Head of caudate nucleus (tissue), 42 donors: ENCODE measurements at regions of chr3 and their contacts with region 1.

Region 1: GRCh38 chr3:46488735-46489361 is 8.9 kb upstream of the RTP3 start:
- DNase-seq: peak; percentile 73 to 95 (median 89)

Region 2: GRCh38 chr3:46629551-46630517 is 141.0 kb after region 1 on chr3:
- intact Hi-C with region 1: loop called (anchors 5 kb)
- DNase-seq: peak; percentile 52 to 90 (median 80)

Region 3: DNA sequence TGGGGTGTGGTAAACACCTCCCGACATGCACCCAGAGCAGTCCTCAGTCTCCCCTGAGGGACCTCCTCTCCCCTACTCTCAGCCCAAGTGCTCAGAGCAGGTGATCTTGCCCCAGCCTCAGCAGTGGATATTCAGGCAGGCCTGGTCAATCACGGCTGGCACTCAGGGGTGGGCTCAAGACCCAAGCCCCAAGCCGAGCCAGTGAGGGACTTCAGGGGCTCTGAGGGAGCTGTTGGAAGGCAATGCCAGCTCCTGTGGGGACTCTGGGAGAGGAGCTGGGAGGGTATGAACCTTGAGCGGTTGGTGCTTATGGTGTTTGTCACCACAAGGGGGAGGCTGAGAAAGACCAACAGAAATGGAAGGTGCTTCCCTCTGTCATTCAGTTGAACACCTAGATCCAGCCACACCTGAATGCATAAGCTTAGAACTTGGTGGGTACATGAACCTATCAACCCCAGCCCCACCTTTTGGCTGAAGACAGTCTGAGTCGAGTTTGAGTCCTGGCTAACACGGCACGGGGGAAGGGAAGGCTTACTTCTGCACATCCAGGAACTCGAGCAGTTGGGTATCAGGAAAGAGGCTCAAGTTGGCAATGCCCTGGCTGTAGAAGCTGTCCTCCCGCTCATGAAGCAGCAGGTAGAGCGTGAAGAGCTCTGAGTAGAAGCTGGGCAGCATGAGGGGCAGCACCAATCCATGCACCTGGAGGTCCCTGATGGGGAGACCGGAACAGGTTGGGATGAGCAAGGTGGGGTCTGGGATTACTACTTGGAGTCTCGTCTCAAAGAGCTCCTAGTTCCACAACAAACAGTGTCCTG is 185.4 kb after region 1 on chr3:
- intact Hi-C with region 1: no loop called
- DNase-seq: peak in 3 of 42 donors; percentile 2 to 12 (median 8)